A673 (cell line): ENCODE measurements at regions of chr13 and their contacts with region 1.

Region 1: DNA sequence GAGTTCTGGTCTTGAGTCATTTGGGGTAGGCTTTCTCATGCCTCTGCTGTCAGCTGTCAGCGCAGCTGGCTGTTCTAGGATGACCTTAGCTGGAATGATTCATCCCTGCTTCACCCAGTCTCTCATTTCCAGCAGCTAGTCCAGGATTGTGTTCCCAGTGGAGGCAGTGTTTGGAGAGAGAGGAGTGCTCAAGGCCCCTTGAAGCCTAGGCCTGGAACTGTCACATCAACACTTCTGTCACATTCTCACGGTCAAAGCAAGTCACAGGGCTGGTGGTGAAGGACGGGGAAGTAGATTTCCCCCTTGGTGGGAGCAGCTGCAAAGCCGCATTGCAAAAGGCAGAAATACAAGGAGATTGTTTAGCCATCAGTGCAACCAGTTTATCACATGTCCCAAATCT is 15.2 kb downstream of the TPT1 start:
- DNase-seq: no peak
- H3K4me3 ChIP-seq: no peak overlapping the region
- H3K27ac ChIP-seq: peak overlapping the region; percentile 53
- H3K4me1 ChIP-seq: peaks cover 41% of the 10 kb centered on the region
- H3K27me3 ChIP-seq: no peaks in the 10 kb centered on the region
- CTCF ChIP-seq: no peak

Region 2: DNA sequence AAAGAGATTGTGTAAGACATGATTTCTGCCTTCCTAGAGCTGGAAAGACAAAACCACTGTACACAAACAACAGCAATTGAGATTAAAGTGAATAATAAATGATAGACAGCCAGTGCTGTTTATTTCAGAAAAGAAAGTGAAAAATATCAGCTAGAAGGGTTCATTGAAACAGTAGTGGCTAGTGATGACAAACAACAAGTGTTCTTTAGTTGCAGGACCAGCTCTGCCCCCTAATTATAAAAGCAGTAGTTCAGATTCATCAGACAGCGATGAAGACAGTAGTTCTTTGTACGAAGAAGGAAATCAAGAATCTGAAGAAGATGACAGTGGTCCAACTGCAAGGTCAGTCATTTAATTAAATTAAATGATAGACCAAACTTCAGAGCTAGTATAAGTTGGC is 321.7 kb before region 1 on chr13:
- CTCF ChIA-PET with region 1: no interaction called
- POLR2A ChIA-PET with region 1: interaction called, 12 read pairs
- intact Hi-C with region 1: no loop called
- DNase-seq: no peak
- H3K4me3 ChIP-seq: no peak overlapping the region
- H3K27ac ChIP-seq: no peak overlapping the region
- H3K4me1 ChIP-seq: no peaks in the 10 kb centered on the region
- H3K27me3 ChIP-seq: no peaks in the 10 kb centered on the region
- CTCF ChIP-seq: no peak

Region 3: GRCh38 chr13:45142440-45143345 is 183.1 kb before region 1 on chr13:
- CTCF ChIA-PET with region 1: no interaction called
- POLR2A ChIA-PET with region 1: no interaction called
- intact Hi-C with region 1: no loop called
- DNase-seq: peak; percentile 78
- H3K4me3 ChIP-seq: no peak overlapping the region
- H3K27ac ChIP-seq: peak overlapping the region; percentile 44
- H3K4me1 ChIP-seq: peaks cover 27% of the 10 kb centered on the region
- H3K27me3 ChIP-seq: no peaks in the 10 kb centered on the region
- CTCF ChIP-seq: no peak

Region 4: DNA sequence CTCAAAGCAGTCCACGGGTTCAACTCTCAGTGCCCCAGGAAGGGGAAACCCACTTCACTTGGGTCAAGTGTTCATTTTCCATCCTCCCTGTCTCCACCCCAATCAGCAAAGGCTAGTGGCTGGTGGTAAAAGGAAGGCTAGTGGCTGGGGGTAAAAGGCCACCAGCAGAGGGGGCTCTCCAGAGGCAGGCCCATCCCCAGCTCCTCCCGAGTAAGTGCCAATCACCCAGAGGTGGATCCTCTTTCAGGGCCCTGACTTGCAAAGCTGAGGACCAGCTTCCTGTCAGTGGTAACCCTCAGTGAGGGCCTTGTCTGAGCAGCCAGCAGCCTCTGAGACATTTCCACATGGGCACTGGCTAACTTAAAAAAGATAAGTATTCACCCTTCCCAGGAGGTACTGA is 37.1 kb after region 1 on chr13:
- CTCF ChIA-PET with region 1: no interaction called
- POLR2A ChIA-PET with region 1: no interaction called
- intact Hi-C with region 1: no loop called
- DNase-seq: no peak
- H3K4me3 ChIP-seq: no peak overlapping the region
- H3K27ac ChIP-seq: no peak overlapping the region
- H3K4me1 ChIP-seq: peaks cover 3% of the 10 kb centered on the region
- H3K27me3 ChIP-seq: no peaks in the 10 kb centered on the region
- CTCF ChIP-seq: no peak